HepG2 (cell line): ENCODE measurements at regions of chr5 and their contacts with region 1.

Region 1: DNA sequence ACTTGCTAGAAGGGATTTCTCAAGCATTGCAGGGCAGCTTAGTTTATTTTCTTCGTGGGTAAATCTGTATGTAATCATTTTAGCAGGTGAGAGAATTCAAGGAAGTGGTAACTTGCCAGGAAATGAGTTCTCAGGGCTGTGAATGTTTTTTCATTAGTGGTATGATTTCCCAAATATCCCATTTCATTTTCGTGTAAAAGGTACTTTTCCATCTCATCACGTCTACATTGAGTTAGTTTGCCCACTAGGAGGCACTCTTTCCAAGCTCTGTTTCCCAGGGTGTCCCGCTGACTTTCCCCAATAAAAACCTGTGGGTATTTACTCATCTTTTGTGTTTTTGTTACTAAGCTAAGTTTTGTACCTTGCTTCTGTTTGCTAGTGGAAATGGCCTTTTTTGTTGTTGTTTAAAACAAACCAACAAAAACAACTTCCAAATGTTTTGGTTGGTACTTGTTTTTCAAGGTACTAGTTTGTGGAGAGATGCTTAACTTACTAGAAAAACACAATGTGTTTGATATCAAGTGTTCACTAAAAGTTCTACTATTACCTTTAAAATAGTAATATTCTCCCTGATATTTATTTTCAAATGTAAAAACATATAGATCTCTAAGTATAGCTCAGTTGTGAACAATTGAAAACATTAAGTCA is 373.6 kb downstream of the ADGRV1 start:
- DNase-seq: peak; percentile 48
- ATAC-seq: peak; percentile 67
- H3K4me3 ChIP-seq: no peak overlapping the region
- H3K27ac ChIP-seq: no peak overlapping the region
- H3K4me1 ChIP-seq: peaks cover 45% of the 10 kb centered on the region
- H3K27me3 ChIP-seq: no peaks in the 10 kb centered on the region
- CTCF ChIP-seq: peak; percentile 80
- EP300 ChIP-seq: peak in 1 of 2 experiments; percentile 28; a peak in 1 of 4 replicates
- POLR2A ChIP-seq: no peak
- RAD21 ChIP-seq: peak; percentile 86

Region 2: DNA sequence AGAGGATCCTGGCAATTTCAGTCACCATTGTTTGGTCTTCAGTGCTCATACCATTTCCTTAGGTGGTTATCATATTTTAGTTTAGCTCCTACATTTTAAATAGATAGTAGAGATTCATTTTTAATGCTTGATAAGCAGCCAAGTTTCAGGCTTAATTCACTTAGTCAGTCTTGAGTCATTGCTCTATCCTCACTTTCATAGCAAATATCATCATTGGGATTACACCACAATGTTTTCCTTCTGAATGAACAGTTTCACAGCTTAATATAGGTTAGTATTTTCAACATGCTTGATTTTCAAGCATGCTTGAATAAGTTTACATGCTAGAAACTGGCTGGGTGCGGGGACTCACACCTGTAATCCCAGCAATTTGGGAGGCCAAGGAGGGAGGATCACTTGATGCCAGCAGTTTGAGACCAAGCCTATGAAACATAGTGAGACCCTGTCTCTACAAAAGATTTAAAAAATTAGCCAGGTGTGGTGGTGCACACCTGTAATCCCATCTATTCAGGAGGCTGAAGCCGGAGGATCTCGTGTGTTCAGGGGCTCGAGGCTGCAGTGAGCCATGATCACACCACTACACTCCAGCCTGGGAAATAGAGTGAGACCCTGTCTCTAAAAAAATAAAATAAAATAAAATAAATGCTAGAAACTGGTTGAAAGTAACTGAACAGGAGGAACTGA is 33.7 kb before region 1 on chr5:
- CTCF ChIA-PET with region 1: no interaction called
- POLR2A ChIA-PET with region 1: no interaction called
- in situ Hi-C with region 1: no loop called
- intact Hi-C with region 1: no loop called
- DNase-seq: no peak
- ATAC-seq: no peak
- H3K4me3 ChIP-seq: peak overlapping the region in 2 of 3 experiments; percentile 21 to 31; a peak in 3 of 6 replicates
- H3K27ac ChIP-seq: peak overlapping the region; percentile 82
- H3K4me1 ChIP-seq: peaks cover 65% of the 10 kb centered on the region
- H3K27me3 ChIP-seq: no peaks in the 10 kb centered on the region
- CTCF ChIP-seq: no peak
- EP300 ChIP-seq: no peak
- POLR2A ChIP-seq: no peak
- RAD21 ChIP-seq: no peak

Region 3: DNA sequence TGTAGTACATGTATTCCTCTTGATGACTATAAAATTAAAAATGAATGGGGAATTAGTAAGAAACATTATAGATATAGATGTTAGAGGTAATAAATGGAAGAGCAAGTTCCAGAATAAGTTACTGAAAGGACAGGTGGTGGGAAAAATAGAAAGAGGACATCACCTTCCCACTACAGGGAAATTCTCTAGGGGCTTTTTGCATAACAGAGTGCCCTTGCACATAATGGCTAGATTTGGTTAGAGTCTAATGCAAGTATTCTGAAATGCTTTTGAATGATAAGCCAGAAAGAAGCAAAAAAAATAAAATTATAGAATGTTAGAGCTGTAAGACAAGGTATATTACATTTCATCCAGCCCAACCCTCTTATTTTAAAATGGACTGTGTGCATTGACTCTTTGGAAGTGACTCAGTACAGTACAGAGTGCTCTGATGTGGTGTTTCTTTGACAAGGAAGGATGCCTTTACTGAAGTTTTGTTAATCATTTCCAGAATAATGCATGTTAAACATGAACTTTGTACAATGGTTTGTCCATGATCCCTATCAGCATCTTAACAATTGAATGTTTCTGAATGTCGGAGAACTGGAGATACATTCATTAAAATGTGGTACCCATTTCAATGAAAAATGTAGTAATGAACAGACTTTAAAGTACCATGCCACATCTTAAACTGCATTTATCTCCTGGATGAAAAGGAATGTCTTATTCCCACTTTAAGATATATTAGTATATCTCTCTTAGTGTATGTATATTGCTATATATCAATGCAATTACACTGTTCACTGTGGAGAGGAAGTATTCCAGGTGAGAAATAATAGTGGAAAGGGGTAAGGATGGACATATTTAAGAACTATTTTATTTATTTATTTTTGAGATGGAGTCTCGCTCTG is 17.5 kb after region 1 on chr5:
- CTCF ChIA-PET with region 1: no interaction called
- POLR2A ChIA-PET with region 1: no interaction called
- in situ Hi-C with region 1: no loop called
- intact Hi-C with region 1: no loop called
- DNase-seq: peak; percentile 97
- ATAC-seq: peak; percentile 100
- H3K4me3 ChIP-seq: peak overlapping the region in 1 of 3 experiments; percentile 14; a peak in 2 of 6 replicates
- H3K27ac ChIP-seq: peak overlapping the region; percentile 69
- H3K4me1 ChIP-seq: peaks cover 42% of the 10 kb centered on the region
- H3K27me3 ChIP-seq: no peaks in the 10 kb centered on the region
- CTCF ChIP-seq: no peak
- EP300 ChIP-seq: peak; percentile 28 to 88; a peak in 3 of 4 replicates
- POLR2A ChIP-seq: peak in 1 of 2 experiments; percentile 36; a peak in 1 of 4 replicates
- RAD21 ChIP-seq: no peak

Region 4: DNA sequence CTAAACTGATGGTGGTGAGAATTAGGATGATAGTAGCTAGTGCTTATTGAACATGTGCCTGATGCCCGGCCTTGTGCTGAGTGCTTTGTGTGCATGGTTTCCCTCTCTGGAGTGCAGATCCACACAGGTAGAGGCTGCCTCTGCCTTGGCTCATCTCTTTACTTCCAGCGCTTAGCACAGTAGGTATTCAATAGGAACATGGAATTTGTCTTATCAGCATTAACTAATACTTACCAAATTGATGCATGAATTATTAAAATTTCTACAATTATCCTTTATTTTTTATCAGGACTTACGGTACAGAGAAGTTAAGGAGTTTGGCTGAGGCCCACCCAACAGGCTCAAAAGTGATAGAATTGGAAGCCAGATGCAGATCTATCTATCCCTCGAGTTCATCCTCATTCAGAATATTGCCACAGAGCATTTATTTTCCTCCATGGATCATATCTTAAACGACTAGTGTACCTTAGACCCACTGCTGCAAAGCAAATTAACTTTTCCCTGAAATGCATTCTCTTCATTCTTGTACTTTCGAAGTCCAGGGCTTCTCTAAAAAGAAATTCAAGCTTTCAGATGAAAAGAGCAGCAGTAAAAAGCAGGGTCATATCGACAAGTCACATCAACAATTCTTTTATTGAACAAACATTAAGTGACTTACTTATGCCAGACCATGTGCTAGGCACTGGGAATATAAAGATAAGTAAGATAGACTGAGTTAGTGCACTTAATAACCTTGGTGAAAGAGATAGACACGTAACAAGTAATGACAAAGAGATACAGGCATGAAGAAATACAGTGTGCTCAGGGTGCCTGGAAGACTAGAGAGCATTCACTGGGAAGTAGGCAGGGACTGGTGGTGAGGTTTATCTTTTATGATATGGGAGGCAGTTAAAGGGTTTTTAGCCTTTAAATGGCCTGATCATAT is 160.9 kb after region 1 on chr5:
- CTCF ChIA-PET with region 1: no interaction called
- POLR2A ChIA-PET with region 1: no interaction called
- in situ Hi-C with region 1: loop called (anchors 10 kb)
- intact Hi-C with region 1: loop called (anchors 2 kb)
- DNase-seq: peak; percentile 59
- ATAC-seq: peak; percentile 90
- H3K4me3 ChIP-seq: peak overlapping the region in 2 of 3 experiments; percentile 25 to 35; a peak in 1 of 6 replicates
- H3K27ac ChIP-seq: peak overlapping the region; percentile 56
- H3K4me1 ChIP-seq: peaks cover 25% of the 10 kb centered on the region
- H3K27me3 ChIP-seq: no peaks in the 10 kb centered on the region
- CTCF ChIP-seq: no peak
- EP300 ChIP-seq: 0 out of 4 replicates have a peak, but pooled peaks of 1 of the 2 experiments have one; percentile 9
- POLR2A ChIP-seq: no peak
- RAD21 ChIP-seq: no peak

Region 5: DNA sequence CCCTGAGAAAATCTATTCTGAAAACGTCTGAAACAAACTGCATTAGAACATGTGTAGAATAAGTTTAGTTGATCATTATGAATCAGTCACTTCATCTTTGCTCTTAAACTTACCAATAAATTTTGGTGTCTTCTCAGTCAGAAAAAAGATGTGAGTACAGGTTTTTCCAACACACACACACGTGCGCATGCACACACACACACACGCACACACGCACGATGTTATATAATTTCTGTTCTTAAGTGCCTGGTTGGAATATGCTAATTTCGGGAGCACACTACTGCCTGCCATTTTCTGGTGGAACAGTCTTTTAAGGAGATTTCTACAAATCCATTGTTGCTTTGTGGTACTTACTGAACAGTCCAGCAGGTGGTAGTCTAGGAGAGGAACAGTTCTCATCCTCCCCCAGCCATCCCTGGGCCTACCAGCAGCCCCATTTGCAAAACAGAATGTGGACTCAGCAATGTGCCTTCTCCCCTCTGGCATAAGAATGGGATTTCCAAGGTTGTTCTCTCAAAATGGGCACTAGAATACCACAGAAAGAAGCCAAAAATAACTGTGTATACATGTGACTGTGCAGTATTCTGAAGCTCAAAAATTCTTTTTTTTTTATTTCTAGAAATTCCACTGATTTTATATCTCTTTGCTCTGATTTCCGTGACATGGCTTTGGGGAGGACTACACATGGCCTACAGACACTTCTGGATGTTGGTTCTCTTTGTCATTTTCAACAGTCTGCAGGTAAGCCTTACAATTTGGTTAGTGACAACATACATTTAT is 169.6 kb after region 1 on chr5:
- CTCF ChIA-PET with region 1: no interaction called
- POLR2A ChIA-PET with region 1: no interaction called
- in situ Hi-C with region 1: loop called (anchors 10 kb)
- intact Hi-C with region 1: loop called (anchors 2 kb)
- DNase-seq: peak; percentile 64
- ATAC-seq: peak; percentile 99
- H3K4me3 ChIP-seq: no peak overlapping the region
- H3K27ac ChIP-seq: no peak overlapping the region
- H3K4me1 ChIP-seq: peaks cover 11% of the 10 kb centered on the region
- H3K27me3 ChIP-seq: no peaks in the 10 kb centered on the region
- CTCF ChIP-seq: peak; percentile 85
- EP300 ChIP-seq: no peak
- POLR2A ChIP-seq: no peak
- RAD21 ChIP-seq: peak; percentile 87

Region 6: DNA sequence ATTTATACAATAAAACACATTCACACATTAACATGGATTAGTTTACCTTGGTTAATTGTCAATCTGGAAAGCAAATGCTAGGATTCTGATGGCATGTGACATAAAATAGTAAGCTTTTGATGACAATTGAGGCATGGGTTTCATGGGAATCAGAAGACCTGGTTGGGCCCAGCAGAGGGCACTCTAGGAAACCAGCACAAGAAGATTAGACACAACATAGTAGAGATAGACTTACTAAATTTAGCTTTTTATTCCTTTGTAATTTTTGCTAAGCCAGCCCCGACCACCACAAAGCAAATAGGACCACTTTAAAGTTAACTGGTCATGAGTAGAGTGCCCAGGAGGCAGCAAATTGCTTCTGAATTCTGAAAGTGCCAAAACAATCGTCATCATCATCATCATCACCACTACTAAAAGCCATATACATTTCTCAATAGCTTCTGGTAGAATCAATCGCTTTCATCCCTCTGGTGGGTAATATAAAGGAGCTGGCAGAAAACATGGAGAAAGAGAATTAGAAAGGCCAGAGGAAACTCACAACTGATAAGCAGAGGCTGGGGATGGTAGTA is 287.7 kb after region 1 on chr5:
- CTCF ChIA-PET with region 1: no interaction called
- POLR2A ChIA-PET with region 1: no interaction called
- in situ Hi-C with region 1: no loop called
- intact Hi-C with region 1: loop called (anchors 2 kb)
- DNase-seq: no peak
- ATAC-seq: peak; percentile 53
- H3K4me3 ChIP-seq: no peak overlapping the region
- H3K27ac ChIP-seq: no peak overlapping the region
- H3K4me1 ChIP-seq: no peaks in the 10 kb centered on the region; the same call in 1 of the 2 replicates
- H3K27me3 ChIP-seq: no peaks in the 10 kb centered on the region
- CTCF ChIP-seq: peak; percentile 33; the same call in 1 of the 2 replicates
- EP300 ChIP-seq: no peak
- POLR2A ChIP-seq: no peak
- RAD21 ChIP-seq: no peak